ENCODE measurements at regions of chr4 and their contacts with region 1.

Region 1: GRCh38 chr4:144174401-144175067 is 34.0 kb upstream of the GYPA start:
- DNase-seq: no peak
- H3K4me3 ChIP-seq: no peak overlapping the region
- H3K27ac ChIP-seq: no peak overlapping the region
- H3K4me1 ChIP-seq: peaks cover 0 to 7% (median 4%) of the 10 kb centered on the region in 6 donors
- H3K27me3 ChIP-seq: no peaks in the 10 kb centered on the region
- CTCF ChIP-seq: peak in 9 of 11 experiments; percentile 24 to 63 (median 36)
- POLR2A ChIP-seq: no peak

Region 2: DNA sequence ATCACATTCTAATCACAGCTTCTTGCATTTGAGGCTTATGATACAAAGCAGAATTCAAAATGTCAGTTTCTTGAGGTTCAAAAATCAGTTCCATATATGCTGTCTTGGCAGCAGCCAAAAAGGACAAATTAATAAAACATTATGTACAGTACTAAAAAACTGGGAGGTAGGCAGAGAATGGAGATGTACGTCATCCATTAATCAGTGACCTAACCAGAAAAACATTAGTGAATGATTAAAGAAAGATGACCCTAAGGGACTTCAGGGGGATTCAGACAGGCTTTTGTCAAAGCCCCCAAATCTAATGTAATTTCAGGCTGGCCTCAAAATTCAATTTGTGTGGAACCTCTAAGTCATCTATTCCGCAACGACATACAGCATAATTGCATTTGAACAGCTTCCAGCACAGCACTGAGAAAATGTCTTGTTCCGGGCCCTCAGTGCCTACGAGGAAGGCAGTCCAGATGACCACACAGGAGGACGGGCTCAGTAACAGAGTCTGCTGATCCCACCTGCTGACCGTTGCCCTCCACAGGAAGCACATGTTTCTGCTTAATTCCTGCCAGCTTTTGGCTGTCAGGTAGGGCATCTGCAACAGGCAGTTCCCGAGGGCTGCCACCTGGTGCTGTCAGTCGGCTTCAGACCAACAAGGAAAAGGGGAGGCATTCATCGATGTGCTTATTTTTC is 387.6 kb after region 1 on chr4:
- intact Hi-C with region 1: no loop called
- DNase-seq: no peak
- H3K4me3 ChIP-seq: no peak overlapping the region
- H3K27ac ChIP-seq: no peak overlapping the region
- H3K4me1 ChIP-seq: no peaks in the 10 kb centered on the region
- H3K27me3 ChIP-seq: no peaks in the 10 kb centered on the region
- CTCF ChIP-seq: no peak
- POLR2A ChIP-seq: no peak

Region 3: DNA sequence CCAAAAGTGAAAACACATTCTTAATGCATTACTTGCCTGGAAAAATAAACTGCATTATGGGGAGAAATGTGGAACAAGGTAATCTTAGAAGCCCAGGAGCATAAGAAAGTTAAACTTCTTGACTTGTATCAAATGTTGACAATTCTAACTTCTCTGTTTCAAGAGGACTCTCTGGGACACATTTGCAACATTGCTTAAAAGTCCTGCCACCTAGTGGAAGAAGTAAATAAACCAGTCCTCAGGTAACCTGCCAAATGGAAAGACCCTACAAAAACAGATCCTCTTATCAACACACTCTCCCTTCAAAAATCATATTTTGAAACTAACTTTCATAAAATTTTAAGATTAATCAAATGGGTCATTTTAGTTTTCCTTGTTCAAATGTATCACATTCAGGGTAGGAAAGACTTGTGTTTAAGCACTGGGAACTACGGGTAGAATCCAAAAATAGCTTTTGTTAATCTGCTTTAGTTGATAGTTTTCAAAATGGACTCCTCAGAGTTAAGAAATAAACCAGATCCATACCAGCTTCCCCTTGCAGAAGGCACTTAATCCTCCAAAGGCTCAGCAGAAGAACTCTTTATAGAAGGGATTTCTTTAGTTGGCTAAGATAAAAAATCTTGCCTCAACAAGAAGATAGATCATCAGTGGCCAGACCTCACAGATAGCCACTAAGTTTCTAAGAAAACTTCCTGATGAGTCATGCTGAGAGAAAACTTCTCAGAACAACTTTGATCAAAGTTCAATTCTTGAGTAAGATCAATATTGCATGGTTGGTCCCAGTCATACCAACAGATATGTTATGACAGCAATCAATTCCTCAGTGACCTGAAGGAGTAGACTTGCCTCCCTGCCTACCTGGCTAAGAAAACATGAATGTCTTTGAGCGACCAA is 613.1 kb after region 1 on chr4:
- intact Hi-C with region 1: loop called (anchors 5 kb)
- DNase-seq: no peak
- H3K4me3 ChIP-seq: no peak overlapping the region
- H3K27ac ChIP-seq: no peak overlapping the region
- H3K4me1 ChIP-seq: no peaks in the 10 kb centered on the region
- H3K27me3 ChIP-seq: no peaks in the 10 kb centered on the region
- CTCF ChIP-seq: peak in 9 of 11 experiments; percentile 11 to 60 (median 33)
- POLR2A ChIP-seq: no peak

Region 4: GRCh38 chr4:145061318-145061920 is 886.9 kb after region 1 on chr4:
- intact Hi-C with region 1: loop called (anchors 5 kb)
- DNase-seq: no peak
- H3K4me3 ChIP-seq: no peak overlapping the region
- H3K27ac ChIP-seq: no peak overlapping the region
- H3K4me1 ChIP-seq: peaks cover 0 to 20% (median 5%) of the 10 kb centered on the region in 6 donors
- H3K27me3 ChIP-seq: no peaks in the 10 kb centered on the region
- CTCF ChIP-seq: peak in 9 of 11 experiments; percentile 13 to 64 (median 51)
- POLR2A ChIP-seq: no peak

Measured in spleen (tissue), 13 donors.